HCT116 (cell line): ENCODE measurements at regions of chr10 and their contacts with region 1.

Region 1: DNA sequence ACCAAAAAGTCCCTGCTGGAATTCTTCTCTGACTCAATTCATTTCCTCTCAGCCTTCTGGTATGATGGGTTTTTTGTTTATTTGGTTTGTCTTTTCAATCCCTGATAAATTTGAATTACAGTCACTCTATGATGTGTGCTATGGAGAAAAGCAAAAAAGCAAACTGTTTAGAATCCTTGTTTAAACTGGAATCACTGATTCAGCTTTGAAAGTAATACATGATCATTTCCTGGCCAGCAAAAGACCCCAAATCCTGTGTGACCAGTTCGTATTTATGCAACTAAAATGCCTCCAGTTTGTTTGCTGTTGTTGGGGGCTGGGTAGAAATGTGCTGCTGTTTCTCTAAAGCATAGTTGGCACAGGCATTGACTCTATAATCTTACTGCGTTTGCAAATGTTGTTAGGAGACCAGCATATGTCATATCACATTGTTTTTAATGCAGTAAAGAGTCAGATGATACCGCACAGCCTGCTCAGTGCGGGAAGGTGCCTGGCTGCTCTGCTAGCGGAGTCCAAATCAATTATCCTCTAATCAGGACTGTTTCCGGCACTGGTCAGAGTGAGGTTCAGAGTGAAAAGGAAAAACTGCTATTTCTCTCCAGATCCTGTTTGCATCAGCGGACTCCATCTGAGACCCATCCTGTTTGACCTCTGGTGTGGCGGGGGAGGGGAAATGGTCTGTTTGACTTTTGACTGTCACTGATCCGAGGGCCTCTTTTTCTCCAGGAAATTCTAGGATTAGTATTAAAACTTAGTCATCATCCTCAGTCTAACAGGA is 40.6 kb upstream of the ADD3 start:
- DNase-seq: no peak
- ATAC-seq: no peak
- H3K4me3 ChIP-seq: no peak overlapping the region
- H3K27ac ChIP-seq: no peak overlapping the region
- H3K4me1 ChIP-seq: peaks cover 0 to under 1% of the 10 kb centered on the region in 2 experiments; a peak in 1 of 4 replicates
- H3K27me3 ChIP-seq: no peaks in the 10 kb centered on the region
- CTCF ChIP-seq: no peak
- POLR2A ChIP-seq: no peak
- RAD21 ChIP-seq: no peak

Region 2: DNA sequence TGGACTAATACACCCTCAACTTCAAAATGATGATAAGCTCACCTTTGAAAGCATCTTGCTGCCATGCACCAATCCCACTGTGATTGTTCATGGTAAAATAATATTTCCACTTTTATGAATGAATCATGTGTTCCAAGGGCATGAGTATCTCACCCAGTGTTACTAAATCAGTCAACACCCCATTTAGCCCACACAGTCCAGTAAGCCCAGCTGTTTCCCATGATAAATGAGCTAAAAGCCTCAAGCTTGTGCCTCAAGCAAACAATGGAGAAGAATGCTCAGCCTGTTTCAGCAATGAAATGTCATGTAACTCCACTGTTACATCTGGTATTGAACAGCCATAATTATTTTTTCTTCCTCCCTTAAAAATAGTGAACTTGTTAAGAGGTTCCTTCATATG is 486.3 kb before region 1 on chr10:
- CTCF ChIA-PET with region 1: no interaction called
- POLR2A ChIA-PET with region 1: no interaction called
- RAD21 ChIA-PET with region 1: no interaction called
- intact Hi-C with region 1: no loop called
- DNase-seq: no peak
- ATAC-seq: no peak
- H3K4me3 ChIP-seq: no peak overlapping the region
- H3K27ac ChIP-seq: no peak overlapping the region
- H3K4me1 ChIP-seq: no peaks in the 10 kb centered on the region
- H3K27me3 ChIP-seq: no peaks in the 10 kb centered on the region
- CTCF ChIP-seq: no peak
- POLR2A ChIP-seq: no peak
- RAD21 ChIP-seq: no peak

Region 3: GRCh38 chr10:109978481-109978880 is 11.3 kb after region 1 on chr10:
- CTCF ChIA-PET with region 1: interaction called, 24 read pairs
- POLR2A ChIA-PET with region 1: no interaction called
- RAD21 ChIA-PET with region 1: no interaction called
- intact Hi-C with region 1: no loop called
- DNase-seq: peak; percentile 37
- ATAC-seq: peak; percentile 87
- H3K4me3 ChIP-seq: no peak overlapping the region
- H3K27ac ChIP-seq: no peak overlapping the region
- H3K4me1 ChIP-seq: no peaks in the 10 kb centered on the region
- H3K27me3 ChIP-seq: 0 out of 2 replicates have a peak, but pooled peaks cover 5% of the 10 kb centered on the region
- CTCF ChIP-seq: peak; percentile 70 to 99 (median 93)
- POLR2A ChIP-seq: no peak
- RAD21 ChIP-seq: peak; percentile 69

Region 4: DNA sequence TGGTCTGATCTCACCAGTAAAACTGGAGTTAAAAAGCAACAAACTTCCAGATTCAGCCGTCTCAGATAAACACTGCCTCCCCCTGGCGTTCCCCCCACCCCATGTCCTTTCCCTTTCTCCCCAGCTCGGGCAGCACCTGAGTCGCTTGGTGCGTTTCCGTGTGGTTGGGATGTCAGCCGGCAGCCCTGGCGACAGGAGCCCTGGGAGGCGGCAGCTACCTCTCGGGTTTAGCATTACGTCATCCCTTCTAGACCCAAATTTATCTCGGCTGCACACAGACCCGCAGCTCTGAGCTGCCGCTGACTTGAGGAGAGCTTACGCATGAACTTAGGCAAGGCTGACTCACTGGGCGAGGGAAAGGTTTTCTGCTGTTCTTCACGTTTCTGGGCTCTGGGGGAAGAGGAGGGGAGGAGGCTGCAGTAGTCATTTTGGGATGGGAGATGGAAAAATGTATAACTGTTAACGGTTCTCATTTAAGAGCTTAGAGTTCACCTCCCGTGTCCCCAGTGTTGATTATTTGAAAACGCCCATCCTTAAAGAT is 254.6 kb after region 1 on chr10:
- CTCF ChIA-PET with region 1: no interaction called
- POLR2A ChIA-PET with region 1: no interaction called
- RAD21 ChIA-PET with region 1: no interaction called
- intact Hi-C with region 1: no loop called
- DNase-seq: peak; percentile 84
- ATAC-seq: peak; percentile 51
- H3K4me3 ChIP-seq: peak overlapping the region; percentile 27 to 52
- H3K27ac ChIP-seq: no peak overlapping the region
- H3K4me1 ChIP-seq: peaks cover 19 to 33% of the 10 kb centered on the region in 2 experiments
- H3K27me3 ChIP-seq: no peaks in the 10 kb centered on the region
- CTCF ChIP-seq: peak in 2 of 3 experiments; percentile 13 to 47; a peak in 3 of 6 replicates
- POLR2A ChIP-seq: no peak
- RAD21 ChIP-seq: no peak